Posterior vena cava (tissue), 2 donors: ENCODE measurements at regions of chr6 and their contacts with region 1.

Region 1: GRCh38 chr6:157379656-157380454 is 1.1 kb upstream of the ZDHHC14 start:
- DNase-seq: peak; percentile 96

Region 2: GRCh38 chr6:157323255-157323965 is 56.4 kb before region 1 on chr6 and contains the start of gene TMEM242:
- intact Hi-C with region 1: loop called (anchors 2 to 5 kb)
- DNase-seq: peak; percentile 97
- total RNA-seq, gene TMEM242: 11.8 to 12.6 TPM

Region 3: DNA sequence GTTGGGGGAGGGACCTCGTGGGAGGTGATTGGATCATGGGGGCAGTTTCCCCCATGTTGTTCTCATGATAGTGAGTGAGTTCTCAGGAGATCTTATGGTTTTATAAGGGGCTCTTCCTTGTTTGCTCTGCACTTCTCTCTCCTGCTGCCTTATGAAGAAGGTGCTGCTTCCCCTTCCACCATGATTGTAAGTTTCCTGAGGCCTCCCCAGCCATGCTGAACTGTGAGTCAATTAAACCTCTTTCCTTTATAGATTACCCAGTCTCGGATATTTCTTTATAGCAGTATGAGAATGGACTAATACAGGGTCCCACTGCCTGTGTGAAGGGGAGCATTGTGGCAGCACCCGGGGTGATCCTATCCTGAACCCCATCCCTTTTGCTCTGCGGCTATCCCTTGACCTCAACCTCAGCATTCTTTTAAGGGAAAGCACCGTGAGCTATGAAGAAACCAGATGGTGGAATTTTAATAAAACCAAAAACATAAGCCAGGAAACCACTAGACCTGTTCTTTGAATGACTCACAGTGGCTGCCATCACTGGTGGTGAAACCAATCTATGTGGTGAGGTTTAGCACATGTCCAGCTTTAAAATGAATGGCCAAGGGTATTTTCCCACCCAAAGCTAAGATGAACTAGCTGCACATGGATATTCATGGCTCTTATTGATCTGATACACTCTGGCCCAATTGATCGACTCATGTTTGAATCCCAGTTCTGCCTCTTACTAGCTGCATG is 63.4 kb after region 1 on chr6:
- intact Hi-C with region 1: no loop called
- DNase-seq: no peak

Region 4: DNA sequence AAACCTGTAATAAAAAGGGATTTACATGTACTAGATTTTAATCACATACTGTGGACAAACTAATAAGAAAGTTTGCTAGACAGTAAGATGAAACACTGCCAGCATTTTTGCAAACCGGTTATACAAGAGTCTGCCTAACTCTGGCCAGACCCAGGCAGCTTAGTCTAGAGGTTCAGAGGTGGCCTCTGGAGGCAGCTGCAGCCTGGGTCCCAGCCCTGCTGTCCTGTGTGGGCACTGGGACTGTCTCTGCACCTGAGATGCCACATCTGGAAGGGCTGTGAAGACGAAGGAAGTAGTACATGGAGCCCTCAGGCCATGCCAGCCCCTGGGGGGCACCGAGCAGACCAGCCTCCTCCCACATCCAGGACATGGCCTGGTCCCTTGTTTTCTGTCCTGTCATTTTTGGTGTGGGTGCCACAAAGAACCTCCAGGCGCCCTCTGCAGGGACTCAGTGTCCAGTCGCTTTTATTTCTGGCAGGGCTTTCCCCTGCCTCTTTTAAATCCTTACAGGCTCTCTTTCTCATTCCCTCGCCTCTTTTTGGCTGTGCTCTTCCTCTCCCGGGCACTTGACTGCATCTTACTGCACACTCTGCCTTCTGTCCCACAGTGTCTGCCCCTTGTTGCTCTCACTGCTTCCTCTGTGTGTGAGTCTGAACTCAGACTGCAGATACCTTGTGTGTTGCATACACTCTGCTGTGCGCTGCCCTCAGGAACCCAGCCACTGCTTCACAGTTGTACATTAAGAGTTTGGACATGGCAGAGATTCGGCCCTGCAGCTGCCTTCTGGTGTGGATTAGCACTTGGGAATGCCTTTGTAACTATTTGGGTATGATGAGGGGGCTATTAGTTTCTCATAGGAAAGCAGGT is 217.8 kb after region 1 on chr6:
- intact Hi-C with region 1: loop called in 1 of 2 experiments (anchors 5 kb)
- DNase-seq: peak; percentile 84

Region 5: GRCh38 chr6:157656437-157656997 is 276.7 kb after region 1 on chr6:
- intact Hi-C with region 1: no loop called
- DNase-seq: no peak